ENCODE measurements at regions of chr5 and their contacts with region 1.

Region 1: GRCh38 chr5:134873987-134874830 is at the start of gene TXNDC15:
- DNase-seq: peak; percentile 94
- H3K4me3 ChIP-seq: peak within 1 kb of the TSS; percentile 57 to 88 (median 74)
- H3K27ac ChIP-seq: peak within 1 kb of the TSS; percentile 95 to 99 (median 96)
- H3K4me1 ChIP-seq: peaks cover 0 to 23% (median 16%) of the 10 kb centered on the region in 4 donors
- H3K27me3 ChIP-seq: no peaks in the 10 kb centered on the region
- CTCF ChIP-seq: no peak
- EP300 ChIP-seq: no peak
- POLR2A ChIP-seq: peak; percentile 35 to 36
- total RNA-seq, gene TXNDC15: 69.0 to 123 (median 95.4) TPM

Region 2: GRCh38 chr5:134541736-134542376 is 332.4 kb before region 1 on chr5:
- intact Hi-C with region 1: no loop called
- DNase-seq: no peak
- H3K4me3 ChIP-seq: no peak overlapping the region
- H3K27ac ChIP-seq: no peak overlapping the region
- H3K4me1 ChIP-seq: peaks cover 0 to 37% (median 33%) of the 10 kb centered on the region in 4 donors
- H3K27me3 ChIP-seq: no peaks in the 10 kb centered on the region
- CTCF ChIP-seq: no peak
- EP300 ChIP-seq: no peak
- POLR2A ChIP-seq: no peak

Region 3: DNA sequence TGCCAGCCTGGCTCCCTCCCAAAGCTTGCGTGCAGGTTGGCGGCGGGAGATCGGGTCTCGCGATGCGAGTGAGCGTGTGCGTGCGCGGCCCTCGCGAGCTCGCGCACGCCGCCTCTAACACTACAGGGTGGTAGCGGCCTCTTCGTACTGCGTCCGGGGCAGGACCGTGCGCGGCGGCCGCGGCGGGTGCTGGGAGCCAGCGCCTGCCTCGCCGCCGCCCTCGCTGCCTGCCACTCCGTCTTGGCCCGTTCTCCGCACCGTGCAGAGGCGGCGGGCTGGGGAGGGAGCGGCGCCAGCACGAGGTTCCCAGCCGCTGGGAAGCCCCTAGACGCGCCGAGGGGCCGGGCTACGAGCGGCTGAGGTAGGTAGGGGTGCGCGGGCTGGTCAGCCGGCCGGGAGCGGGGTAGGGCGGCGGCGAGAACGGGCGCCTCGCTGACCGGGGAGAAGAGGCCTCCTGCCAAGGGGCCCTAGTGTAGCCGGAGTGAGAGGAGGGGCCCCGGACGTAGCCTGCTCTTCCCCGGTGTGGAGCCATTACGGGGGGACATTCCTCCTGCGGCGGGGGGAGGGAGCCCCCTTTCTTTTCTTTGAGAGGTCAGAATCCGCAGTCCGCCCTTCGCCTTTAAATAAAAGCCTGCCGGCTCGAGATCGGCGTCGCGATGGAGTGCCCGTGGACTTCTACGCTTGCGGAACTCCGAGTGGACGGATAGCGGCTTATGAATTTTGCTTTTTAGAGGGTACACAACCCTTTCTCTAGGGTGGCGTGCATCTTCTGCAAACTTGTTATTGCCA is 28.2 kb before region 1 on chr5 and contains the start of gene C5orf24:
- intact Hi-C with region 1: loop called (anchors 1 kb)
- DNase-seq: peak; percentile 98
- H3K4me3 ChIP-seq: peak within 1 kb of the TSS; percentile 82 to 99 (median 86)
- H3K27ac ChIP-seq: peak within 1 kb of the TSS; percentile 94 to 100 (median 97)
- H3K4me1 ChIP-seq: peaks cover 0 to 44% (median 30%) of the 10 kb centered on the region in 4 donors
- H3K27me3 ChIP-seq: no peaks in the 10 kb centered on the region
- CTCF ChIP-seq: no peak
- EP300 ChIP-seq: peak in 1 of 4 donors; percentile 8
- POLR2A ChIP-seq: peak; percentile 58 to 65
- total RNA-seq, gene C5orf24: 38.0 to 82.0 (median 70.8) TPM

Region 4: GRCh38 chr5:135488727-135489465 is 614.7 kb after region 1 on chr5:
- intact Hi-C with region 1: no loop called
- DNase-seq: no peak
- H3K4me3 ChIP-seq: peak overlapping the region; percentile 8 to 45 (median 38)
- H3K27ac ChIP-seq: no peak overlapping the region
- H3K4me1 ChIP-seq: peaks cover 0 to 26% (median 23%) of the 10 kb centered on the region in 4 donors
- H3K27me3 ChIP-seq: peaks cover 13 to 81% (median 66%) of the 10 kb centered on the region in 3 donors
- CTCF ChIP-seq: no peak
- EP300 ChIP-seq: no peak
- POLR2A ChIP-seq: no peak

Measured in sigmoid colon (tissue), 7 donors.